Stomach (tissue), 19 donors: ENCODE measurements at regions of chr2 and their contacts with region 1.

Region 1: GRCh38 chr2:11829947-11830707 is 83.7 kb downstream of the LPIN1 start:
- DNase-seq: peak; percentile 64 to 92
- H3K4me3 ChIP-seq: peak overlapping the region; percentile 29 to 34 (median 32)
- H3K27ac ChIP-seq: peak overlapping the region; percentile 53 to 87 (median 81)
- H3K4me1 ChIP-seq: peaks cover 21 to 29% (median 26%) of the 10 kb centered on the region in 4 donors
- H3K27me3 ChIP-seq: no peaks in the 10 kb centered on the region
- CTCF ChIP-seq: no peak
- EP300 ChIP-seq: no peak
- POLR2A ChIP-seq: no peak

Region 2: GRCh38 chr2:12465631-12466135 is 635.6 kb after region 1 on chr2:
- intact Hi-C with region 1: loop called (anchors 10 kb)
- DNase-seq: peak in 1 of 2 donors; percentile 64
- H3K4me3 ChIP-seq: no peak overlapping the region
- H3K27ac ChIP-seq: peak overlapping the region in 2 of 5 donors; percentile 38 to 64
- H3K4me1 ChIP-seq: peaks cover 0 to 21% (median 8%) of the 10 kb centered on the region in 4 donors
- H3K27me3 ChIP-seq: no peaks in the 10 kb centered on the region
- CTCF ChIP-seq: no peak
- EP300 ChIP-seq: no peak
- POLR2A ChIP-seq: no peak

Region 3: GRCh38 chr2:12716282-12717190 is 886.4 kb after region 1 on chr2 and contains the start of gene TRIB2:
- intact Hi-C with region 1: loop called (anchors 10 kb)
- DNase-seq: peak; percentile 93 to 95
- H3K4me3 ChIP-seq: peak within 1 kb of the TSS; percentile 69 to 87 (median 72)
- H3K27ac ChIP-seq: peak within 1 kb of the TSS; percentile 92 to 97 (median 95)
- H3K4me1 ChIP-seq: peaks cover 30 to 48% (median 40%) of the 10 kb centered on the region in 4 donors
- H3K27me3 ChIP-seq: peaks cover 0 to 14% (median 0%) of the 10 kb centered on the region in 3 donors
- CTCF ChIP-seq: peak in 2 of 7 experiments; percentile 5 to 8
- EP300 ChIP-seq: no peak
- POLR2A ChIP-seq: peak in 2 of 4 donors; percentile 58 to 63
- total RNA-seq, gene TRIB2: 6.4 to 226 (median 91.0) TPM